K562 (cell line): ENCODE measurements at regions of chr3 and their contacts with region 1.

Region 1: DNA sequence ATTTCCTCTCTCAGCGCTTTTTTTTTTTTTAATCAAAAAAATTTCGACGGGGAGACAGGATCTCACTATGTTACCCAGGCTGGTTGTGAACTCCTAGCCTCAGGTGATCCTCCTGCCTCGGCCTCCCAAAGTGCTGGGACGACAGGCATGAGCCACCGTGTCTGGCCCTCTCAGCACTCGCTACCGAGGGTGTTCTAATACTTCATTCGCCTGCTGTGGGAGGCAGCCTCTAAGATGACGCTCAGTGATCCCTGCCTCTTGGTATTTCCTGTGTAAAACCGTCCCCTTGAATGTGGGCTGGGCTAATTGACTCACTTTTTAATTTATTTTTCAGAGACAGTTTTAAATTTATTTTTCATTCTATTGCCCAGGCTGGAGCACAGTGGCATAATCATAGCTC is 62.8 kb upstream of the TFRC start:
- DNase-seq: peak in 1 of 4 experiments; percentile 44
- ATAC-seq: no peak
- H3K4me3 ChIP-seq: peak overlapping the region; percentile 24; the same call in 1 of the 2 replicates
- H3K27ac ChIP-seq: peak overlapping the region; percentile 99
- H3K4me1 ChIP-seq: peaks cover 62 to 66% of the 10 kb centered on the region in 2 experiments
- H3K27me3 ChIP-seq: no peaks in the 10 kb centered on the region
- CTCF ChIP-seq: no peak
- EP300 ChIP-seq: no peak
- POLR2A ChIP-seq: no peak
- RAD21 ChIP-seq: no peak

Region 2: DNA sequence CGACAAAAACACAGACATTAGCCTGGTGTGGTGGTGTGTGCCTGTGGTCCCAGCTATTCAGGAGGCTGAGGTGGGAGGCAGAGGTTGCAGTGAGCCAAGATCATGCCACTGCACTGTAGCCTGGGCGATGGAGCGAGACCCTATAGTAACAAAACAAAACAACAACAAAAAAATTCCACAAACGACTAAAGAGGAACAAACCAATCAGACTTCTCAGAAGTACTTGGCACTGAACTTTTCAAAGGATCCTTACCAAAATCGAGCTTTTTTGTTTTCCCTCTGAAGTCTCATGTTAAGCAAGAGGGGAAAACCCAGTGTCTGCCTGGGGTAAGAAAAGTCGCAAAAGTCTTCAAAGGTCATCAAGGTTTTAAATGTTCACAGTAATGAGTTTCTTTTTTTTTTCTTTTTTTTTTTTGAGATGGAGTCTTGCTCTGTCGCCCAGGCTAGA is 32.7 kb before region 1 on chr3:
- CTCF ChIA-PET with region 1: no interaction called
- POLR2A ChIA-PET with region 1: interaction called, 4 read pairs
- in situ Hi-C with region 1: no loop called
- intact Hi-C with region 1: loop called (anchors 1 kb)
- DNase-seq: no peak
- ATAC-seq: no peak
- H3K4me3 ChIP-seq: no peak overlapping the region
- H3K27ac ChIP-seq: 0 out of 3 replicates have a peak overlapping the region, but pooled peaks have one; percentile 18
- H3K4me1 ChIP-seq: peaks cover 22 to 42% of the 10 kb centered on the region in 2 experiments; a peak in 4 of 5 replicates
- H3K27me3 ChIP-seq: no peaks in the 10 kb centered on the region
- CTCF ChIP-seq: no peak
- EP300 ChIP-seq: no peak
- POLR2A ChIP-seq: no peak
- RAD21 ChIP-seq: no peak

Region 3: DNA sequence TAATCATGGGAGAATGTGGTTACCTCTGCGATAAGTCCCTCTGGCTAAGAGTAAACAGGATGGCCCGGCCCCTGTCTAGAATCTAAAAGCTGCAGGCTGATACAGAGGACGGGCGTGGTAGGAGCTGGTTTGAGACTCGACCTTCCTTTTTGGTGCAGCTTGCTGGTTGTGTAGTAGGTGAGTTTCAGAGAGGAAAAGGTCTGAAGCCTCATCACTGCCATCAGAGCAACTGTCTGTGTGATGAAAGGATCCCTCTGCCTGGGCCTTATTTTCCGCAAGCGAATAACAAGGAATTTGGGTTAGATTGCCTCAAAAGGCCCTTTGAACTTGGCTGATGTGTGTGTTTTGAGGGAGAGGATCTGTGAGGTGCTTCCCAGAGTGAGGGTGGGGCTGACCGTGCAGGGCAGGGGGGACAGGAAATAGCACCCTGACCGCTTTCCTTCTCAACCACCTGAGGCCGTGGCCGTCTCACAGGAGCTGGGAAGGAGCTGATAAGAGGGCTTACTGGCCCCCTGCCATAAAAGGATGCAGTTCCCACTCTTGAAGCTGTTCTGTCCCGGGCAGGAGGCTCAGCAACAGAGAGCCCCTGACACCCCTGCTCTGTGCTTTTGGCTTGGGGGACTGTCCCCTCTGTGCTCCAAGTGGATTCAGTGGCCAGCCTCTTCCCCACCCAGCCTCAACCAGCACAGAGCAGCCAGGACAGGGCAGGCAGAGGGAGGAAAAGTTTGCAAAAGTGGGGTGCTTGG is 17.2 kb before region 1 on chr3:
- CTCF ChIA-PET with region 1: no interaction called
- POLR2A ChIA-PET with region 1: interaction called, 103 read pairs
- in situ Hi-C with region 1: no loop called
- intact Hi-C with region 1: loop called (anchors 1 kb)
- DNase-seq: peak; percentile 81 to 98 (median 88)
- ATAC-seq: peak; percentile 90
- H3K4me3 ChIP-seq: peak overlapping the region; percentile 14; the same call in 1 of the 2 replicates
- H3K27ac ChIP-seq: peak overlapping the region; percentile 96
- H3K4me1 ChIP-seq: peaks cover 33% of the 10 kb centered on the region in 2 experiments
- H3K27me3 ChIP-seq: no peaks in the 10 kb centered on the region
- CTCF ChIP-seq: peak in 2 of 3 experiments; percentile 15 to 49; a peak in 2 of 6 replicates
- EP300 ChIP-seq: peak; percentile 89
- POLR2A ChIP-seq: peak; percentile 53; the same call in 1 of the 2 replicates
- RAD21 ChIP-seq: peak; percentile 43 to 67; a peak in 3 of 4 replicates

Region 4: GRCh38 chr3:196156160-196156559 is 11.5 kb after region 1 on chr3:
- CTCF ChIA-PET with region 1: no interaction called
- POLR2A ChIA-PET with region 1: interaction called, 28 read pairs
- in situ Hi-C with region 1: no loop called
- intact Hi-C with region 1: no loop called
- DNase-seq: no peak
- ATAC-seq: no peak
- H3K4me3 ChIP-seq: no peak overlapping the region
- H3K27ac ChIP-seq: no peak overlapping the region
- H3K4me1 ChIP-seq: peaks cover 13 to 20% of the 10 kb centered on the region in 2 experiments; a peak in 3 of 5 replicates
- H3K27me3 ChIP-seq: no peaks in the 10 kb centered on the region
- CTCF ChIP-seq: no peak
- EP300 ChIP-seq: no peak
- POLR2A ChIP-seq: no peak
- RAD21 ChIP-seq: no peak

Region 5: GRCh38 chr3:196179380-196180308 is 34.9 kb after region 1 on chr3:
- CTCF ChIA-PET with region 1: no interaction called
- POLR2A ChIA-PET with region 1: interaction called, 5 read pairs
- in situ Hi-C with region 1: no loop called
- intact Hi-C with region 1: loop called (anchors 2 kb)
- DNase-seq: peak; percentile 50 to 74 (median 68)
- ATAC-seq: peak; percentile 61
- H3K4me3 ChIP-seq: no peak overlapping the region
- H3K27ac ChIP-seq: peak overlapping the region; percentile 57
- H3K4me1 ChIP-seq: peaks cover 59 to 73% of the 10 kb centered on the region in 2 experiments
- H3K27me3 ChIP-seq: no peaks in the 10 kb centered on the region
- CTCF ChIP-seq: peak in 2 of 3 experiments; percentile 21 to 33; a peak in 3 of 6 replicates
- EP300 ChIP-seq: no peak
- POLR2A ChIP-seq: no peak
- RAD21 ChIP-seq: no peak; a peak in 1 of 4 replicates

Region 6: GRCh38 chr3:196192036-196192523 is 47.4 kb after region 1 on chr3:
- CTCF ChIA-PET with region 1: interaction called, 4 read pairs
- POLR2A ChIA-PET with region 1: interaction called, 5 read pairs
- in situ Hi-C with region 1: no loop called
- intact Hi-C with region 1: loop called (anchors 2 kb)
- DNase-seq: peak in 1 of 4 experiments; percentile 34
- ATAC-seq: no peak
- H3K4me3 ChIP-seq: no peak overlapping the region
- H3K27ac ChIP-seq: peak overlapping the region; percentile 62; the same call in 2 of the 3 replicates
- H3K4me1 ChIP-seq: peaks cover 46 to 83% of the 10 kb centered on the region in 2 experiments
- H3K27me3 ChIP-seq: no peaks in the 10 kb centered on the region
- CTCF ChIP-seq: no peak
- EP300 ChIP-seq: no peak
- POLR2A ChIP-seq: no peak
- RAD21 ChIP-seq: peak in 1 of 2 experiments; percentile 24; a peak in 1 of 4 replicates